AG04449 (cell line): ENCODE measurements at regions of chr6 and their contacts with region 1.

Region 1: GRCh38 chr6:116371120-116371917 is 572 bp downstream of the DSE start:
- DNase-seq: no peak
- H3K4me3 ChIP-seq: peak overlapping the region; percentile 92
- CTCF ChIP-seq: no peak

Region 2: DNA sequence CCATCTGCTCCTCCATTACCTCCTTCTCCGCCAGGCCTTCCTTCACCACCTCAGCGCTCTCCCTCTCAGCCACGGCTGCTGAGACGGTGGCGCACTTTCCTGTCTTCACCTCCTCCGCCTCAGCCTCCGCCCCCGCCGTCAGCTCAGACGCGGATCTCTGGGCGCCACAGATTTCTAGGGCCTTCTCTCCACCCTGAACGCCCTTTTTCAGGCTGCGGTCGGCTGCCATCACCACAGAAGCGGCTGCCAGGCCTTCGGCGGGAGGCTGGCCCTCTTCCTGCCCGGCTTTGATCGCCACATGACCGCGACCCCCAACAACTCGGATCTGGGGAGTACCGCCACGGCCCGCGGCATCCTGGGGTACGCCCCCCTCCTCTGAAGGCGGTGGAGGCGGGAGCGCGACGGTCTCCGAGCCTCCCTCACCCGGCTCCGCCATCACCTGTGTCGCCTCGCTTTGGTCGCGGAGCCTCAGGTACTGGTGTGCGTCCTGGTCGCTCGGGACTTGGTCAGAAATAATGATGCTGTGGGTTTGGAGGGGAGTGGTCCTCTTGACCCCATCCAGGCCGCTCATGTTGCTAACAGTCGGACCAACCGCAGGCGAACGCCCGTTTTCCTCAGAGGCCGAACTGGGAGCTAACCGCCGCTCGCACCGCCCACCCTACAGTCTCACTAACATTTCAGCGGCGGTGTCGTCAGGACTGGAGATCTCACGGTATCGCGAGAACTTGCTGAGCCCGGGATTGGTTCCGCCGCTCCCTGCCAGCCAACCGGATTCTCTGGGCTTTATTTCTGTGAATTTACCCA is 91.9 kb before region 1 on chr6 and contains the start of gene TSPYL1:
- CTCF ChIA-PET with region 1: no interaction called
- POLR2A ChIA-PET with region 1: interaction called, 10 read pairs
- DNase-seq: peak; percentile 59
- H3K4me3 ChIP-seq: peak within 1 kb of the TSS; percentile 90
- CTCF ChIP-seq: no peak

Region 3: DNA sequence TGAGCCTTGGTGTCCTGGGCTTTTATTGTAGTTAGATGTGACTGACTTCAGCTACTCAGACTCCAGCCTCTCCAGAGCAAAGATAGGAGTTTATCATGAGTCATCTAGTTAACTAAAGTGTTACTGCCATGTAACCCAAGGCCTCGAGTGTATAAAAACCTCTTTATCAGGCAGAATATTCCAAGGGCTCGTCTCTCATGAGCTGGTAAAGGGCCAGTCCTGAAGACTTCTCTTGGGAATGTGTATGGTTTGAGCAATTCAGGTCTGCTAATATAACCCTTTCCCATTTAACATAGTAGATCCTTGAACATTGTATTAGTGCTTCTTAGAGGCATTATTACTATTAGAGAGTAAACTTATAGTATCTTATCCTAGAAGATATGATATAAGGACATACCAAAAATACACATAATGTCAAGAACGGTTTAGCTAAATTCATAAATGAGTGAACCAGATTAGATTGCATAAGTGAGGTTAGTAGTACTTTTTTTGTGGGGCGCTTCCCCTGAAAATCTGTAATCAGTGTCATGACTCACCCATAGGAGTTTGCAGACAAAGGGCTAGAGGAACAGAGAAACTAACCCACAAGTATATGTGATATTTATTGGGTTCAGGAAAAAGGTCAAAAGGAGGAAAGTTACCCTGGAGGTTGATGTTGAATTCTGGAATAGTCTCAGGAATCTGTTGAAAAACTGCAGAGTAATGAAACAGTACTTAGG is 15.4 kb after region 1 on chr6:
- CTCF ChIA-PET with region 1: interaction called, 3 read pairs
- POLR2A ChIA-PET with region 1: interaction called, 13 read pairs
- DNase-seq: no peak
- H3K4me3 ChIP-seq: no peak overlapping the region
- CTCF ChIP-seq: no peak